MCF 10A (cell line): ENCODE measurements at regions of chr5 and their contacts with region 1.

Region 1: DNA sequence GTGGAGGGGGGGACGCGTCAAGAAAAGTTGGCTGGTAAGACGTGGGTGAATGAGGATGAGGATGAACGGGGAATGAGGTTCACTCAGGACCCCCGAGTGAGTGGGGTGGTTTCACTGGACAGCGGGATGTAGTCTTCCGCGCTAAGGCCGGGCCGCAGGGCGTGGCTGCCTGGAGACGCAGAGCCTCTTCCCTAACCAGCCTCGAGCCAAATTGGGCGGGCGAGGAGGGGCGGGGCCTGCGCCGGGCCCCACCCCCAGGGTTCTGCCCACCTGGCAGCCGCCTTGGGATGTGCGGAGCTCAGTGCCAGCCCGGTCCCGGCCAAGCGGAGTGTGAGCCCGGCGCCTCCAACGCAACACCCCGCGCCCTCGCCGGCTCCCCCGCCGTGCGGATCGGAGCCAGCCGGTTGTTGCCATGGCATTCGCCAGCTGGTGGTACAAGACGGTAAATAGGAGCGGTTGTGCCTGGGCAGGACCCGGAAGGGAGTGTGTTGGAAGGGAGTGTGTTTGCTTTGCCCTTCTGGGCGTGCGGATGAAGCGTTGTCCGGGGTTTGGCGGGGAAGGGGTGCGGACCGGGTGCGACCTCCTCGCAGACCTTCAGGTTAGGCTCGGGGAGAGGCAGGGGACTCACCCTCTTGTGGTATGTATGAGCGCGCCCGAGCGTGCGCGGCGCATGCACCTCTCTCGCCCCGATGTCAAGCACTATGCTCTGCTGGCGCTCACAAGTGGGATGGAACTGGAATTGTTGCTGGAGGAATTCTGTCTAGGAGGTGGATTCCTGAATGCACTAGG is 743 bp downstream of the CAST start:
- DNase-seq: peak; percentile 95
- H3K4me3 Mint-ChIP-seq: peak overlapping the region; percentile 76
- H3K27ac Mint-ChIP-seq: peak overlapping the region; percentile 91
- H3K4me1 Mint-ChIP-seq: peaks cover 20% of the 10 kb centered on the region
- H3K27me3 Mint-ChIP-seq: no peaks in the 10 kb centered on the region
- CTCF ChIP-seq: no peak

Region 2: GRCh38 chr5:96344678-96345577 is 318.0 kb before region 1 on chr5:
- CTCF ChIA-PET with region 1: interaction called, 7 read pairs
- POLR2A ChIA-PET with region 1: interaction called, 13 read pairs
- intact Hi-C with region 1: no loop called
- DNase-seq: peak; percentile 83
- H3K4me3 Mint-ChIP-seq: no peak overlapping the region
- H3K27ac Mint-ChIP-seq: no peak overlapping the region
- H3K4me1 Mint-ChIP-seq: peaks cover 16% of the 10 kb centered on the region
- H3K27me3 Mint-ChIP-seq: no peaks in the 10 kb centered on the region
- CTCF ChIP-seq: peak; percentile 67

Region 3: DNA sequence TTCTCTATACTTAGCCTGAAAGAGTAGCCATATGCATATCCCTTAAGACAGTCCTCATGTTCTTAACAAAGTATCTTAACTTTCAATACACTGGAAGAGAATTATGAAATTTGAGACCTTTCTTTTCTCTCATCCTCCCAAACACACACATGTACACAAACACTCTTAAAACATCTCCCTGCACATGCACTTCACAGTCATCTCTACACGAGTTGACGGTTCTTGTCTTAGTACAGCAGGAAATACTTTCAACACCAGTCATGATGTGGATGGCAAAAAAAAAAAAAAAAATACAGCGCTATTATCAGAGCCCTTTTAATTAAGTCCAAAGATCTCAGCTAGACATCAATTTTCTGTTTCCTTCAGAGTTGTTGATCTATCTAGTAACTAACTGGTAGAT is 186.3 kb before region 1 on chr5:
- CTCF ChIA-PET with region 1: no interaction called
- POLR2A ChIA-PET with region 1: no interaction called
- intact Hi-C with region 1: no loop called
- DNase-seq: no peak
- H3K4me3 Mint-ChIP-seq: no peak overlapping the region
- H3K27ac Mint-ChIP-seq: no peak overlapping the region
- H3K4me1 Mint-ChIP-seq: peaks cover 6% of the 10 kb centered on the region
- H3K27me3 Mint-ChIP-seq: no peaks in the 10 kb centered on the region
- CTCF ChIP-seq: no peak

Region 4: DNA sequence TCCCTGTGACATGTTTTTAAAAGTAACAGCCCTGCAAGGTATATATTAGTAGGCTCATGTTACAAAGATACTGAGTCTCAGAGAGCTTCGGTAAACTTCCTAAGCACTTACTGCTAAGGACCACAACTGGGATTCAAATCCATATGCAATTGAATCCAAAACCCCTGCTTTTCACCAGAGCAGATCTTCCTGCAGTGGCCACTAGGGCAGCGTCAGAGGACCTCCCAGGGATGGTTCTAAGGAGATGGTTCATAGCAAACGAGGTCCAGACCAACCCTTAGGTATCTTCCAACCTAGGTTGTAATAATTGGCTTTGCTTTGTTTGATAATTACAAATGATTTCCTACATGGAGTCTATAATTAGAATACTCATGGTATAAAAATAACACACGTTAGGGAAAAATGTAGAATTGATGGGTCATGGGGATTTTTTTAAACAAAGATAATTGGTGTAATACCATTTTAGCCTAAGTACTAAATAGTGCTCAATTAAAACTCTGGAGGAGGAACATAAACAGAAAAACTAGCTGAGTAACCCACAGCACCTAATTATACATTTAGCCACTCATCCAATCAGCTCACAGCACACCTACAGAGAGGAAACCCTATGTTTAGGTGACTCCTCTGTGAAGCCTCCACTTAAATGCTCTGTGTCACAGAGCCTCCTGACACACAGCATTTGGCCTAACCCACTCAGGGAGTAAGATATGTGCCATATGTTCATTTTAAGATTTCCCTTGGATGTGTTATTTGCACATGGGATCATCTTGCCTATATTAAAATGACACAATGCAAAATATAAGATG is 10.8 kb before region 1 on chr5:
- CTCF ChIA-PET with region 1: interaction called, 8 read pairs
- POLR2A ChIA-PET with region 1: interaction called, 47 read pairs
- intact Hi-C with region 1: no loop called
- DNase-seq: peak; percentile 39
- H3K4me3 Mint-ChIP-seq: no peak overlapping the region
- H3K27ac Mint-ChIP-seq: no peak overlapping the region
- H3K4me1 Mint-ChIP-seq: peaks cover 40% of the 10 kb centered on the region
- H3K27me3 Mint-ChIP-seq: no peaks in the 10 kb centered on the region
- CTCF ChIP-seq: peak; percentile 13

Region 5: DNA sequence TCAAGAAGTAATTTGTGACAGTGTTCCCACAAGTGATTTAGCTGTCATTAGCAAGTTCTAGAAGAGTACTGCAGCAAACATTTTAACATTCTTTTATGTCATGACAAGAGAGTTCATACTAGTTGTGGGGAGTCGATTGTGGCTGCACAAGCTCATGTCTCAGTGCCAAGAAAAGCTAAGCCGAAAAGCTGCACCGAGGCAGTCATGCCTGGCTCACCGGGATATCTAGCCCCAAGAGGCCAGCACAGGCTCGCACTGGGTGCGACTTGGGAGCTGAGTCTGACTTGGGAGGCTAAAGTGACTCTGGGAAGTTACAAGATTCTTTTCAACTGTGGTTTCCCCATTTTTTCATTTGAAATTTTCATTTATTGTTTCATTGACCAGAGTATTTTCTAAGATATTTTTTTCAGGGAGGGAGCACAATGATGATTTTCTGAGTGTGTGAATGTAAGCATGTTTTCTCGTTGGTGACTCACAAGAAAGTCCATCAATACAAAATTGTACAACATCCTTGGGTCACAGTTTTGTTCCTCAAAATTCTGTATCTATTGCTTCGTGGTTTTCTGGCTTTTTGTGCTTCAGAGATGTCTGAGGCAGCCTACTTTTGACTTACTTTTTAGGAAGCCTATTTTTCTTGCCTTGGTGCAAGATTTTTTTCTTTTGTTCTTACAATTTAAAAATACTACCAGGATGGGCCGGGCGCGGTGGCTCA is 18.0 kb after region 1 on chr5:
- CTCF ChIA-PET with region 1: interaction called, 28 read pairs
- POLR2A ChIA-PET with region 1: interaction called, 79 read pairs
- intact Hi-C with region 1: no loop called
- DNase-seq: peak; percentile 43
- H3K4me3 Mint-ChIP-seq: no peak overlapping the region
- H3K27ac Mint-ChIP-seq: no peak overlapping the region
- H3K4me1 Mint-ChIP-seq: peaks cover 14% of the 10 kb centered on the region
- H3K27me3 Mint-ChIP-seq: no peaks in the 10 kb centered on the region
- CTCF ChIP-seq: no peak

Region 6: GRCh38 chr5:96702503-96703383 is 39.8 kb after region 1 on chr5:
- CTCF ChIA-PET with region 1: interaction called, 8 read pairs
- POLR2A ChIA-PET with region 1: interaction called, 169 read pairs
- intact Hi-C with region 1: loop called (anchors 5 kb)
- DNase-seq: peak; percentile 91
- H3K4me3 Mint-ChIP-seq: peak overlapping the region; percentile 82
- H3K27ac Mint-ChIP-seq: peak overlapping the region; percentile 97
- H3K4me1 Mint-ChIP-seq: peaks cover 56% of the 10 kb centered on the region
- H3K27me3 Mint-ChIP-seq: no peaks in the 10 kb centered on the region
- CTCF ChIP-seq: no peak

Region 7: GRCh38 chr5:96714951-96715451 is 52.1 kb after region 1 on chr5:
- CTCF ChIA-PET with region 1: no interaction called
- POLR2A ChIA-PET with region 1: interaction called, 28 read pairs
- intact Hi-C with region 1: no loop called
- DNase-seq: peak; percentile 74
- H3K4me3 Mint-ChIP-seq: no peak overlapping the region
- H3K27ac Mint-ChIP-seq: peak overlapping the region; percentile 93
- H3K4me1 Mint-ChIP-seq: peaks cover 43% of the 10 kb centered on the region
- H3K27me3 Mint-ChIP-seq: no peaks in the 10 kb centered on the region
- CTCF ChIP-seq: no peak

Region 8: DNA sequence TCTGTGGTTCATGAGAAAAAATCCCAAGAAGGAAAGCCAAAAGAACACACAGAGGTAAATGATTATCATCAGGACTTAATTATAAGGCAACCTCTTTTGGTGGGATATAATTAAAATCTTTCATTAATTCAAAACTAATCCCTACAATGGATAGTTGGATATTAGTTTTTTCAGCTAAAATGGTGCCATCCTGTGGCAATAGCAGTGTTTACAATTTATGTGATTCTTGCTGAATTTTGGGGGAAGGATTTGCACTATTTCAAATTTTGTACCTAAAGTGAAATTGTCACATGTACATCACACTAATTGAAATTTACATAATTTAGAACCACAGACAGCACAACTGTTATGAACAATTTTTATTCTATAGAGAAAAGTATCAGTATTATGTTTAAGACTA is 66.2 kb after region 1 on chr5:
- CTCF ChIA-PET with region 1: no interaction called
- POLR2A ChIA-PET with region 1: interaction called, 5 read pairs
- intact Hi-C with region 1: loop called (anchors 1 kb)
- DNase-seq: no peak
- H3K4me3 Mint-ChIP-seq: no peak overlapping the region
- H3K27ac Mint-ChIP-seq: no peak overlapping the region
- H3K4me1 Mint-ChIP-seq: peaks cover 12% of the 10 kb centered on the region
- H3K27me3 Mint-ChIP-seq: no peaks in the 10 kb centered on the region
- CTCF ChIP-seq: peak; percentile 34

Region 9: DNA sequence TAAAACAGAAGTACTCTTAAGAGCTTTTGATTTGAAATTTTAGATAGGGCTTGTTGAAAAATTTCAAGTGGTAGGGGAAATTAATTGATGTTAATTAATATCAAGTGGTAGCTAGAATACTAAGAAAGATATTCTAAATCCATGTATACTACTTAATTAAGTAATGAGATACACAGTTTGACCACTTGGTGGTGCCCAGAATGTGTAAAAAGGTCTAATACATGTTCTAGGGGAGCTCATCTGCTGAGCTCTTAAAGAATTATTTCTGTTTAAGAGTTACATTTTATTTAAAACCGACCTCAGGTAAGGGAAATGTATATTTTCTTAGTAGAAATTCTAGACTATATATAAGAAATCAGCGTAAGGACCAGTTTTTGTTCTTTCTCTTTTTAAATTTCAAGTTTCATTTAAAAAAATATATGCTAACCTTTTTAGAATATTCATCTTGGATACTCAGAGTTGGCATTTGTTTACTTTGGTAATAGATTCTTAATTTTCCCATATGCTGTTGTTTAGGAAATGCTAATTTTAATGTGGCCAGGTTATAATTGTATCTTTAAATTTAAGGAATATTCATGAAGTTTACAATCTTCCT is 334.4 kb after region 1 on chr5:
- CTCF ChIA-PET with region 1: no interaction called
- POLR2A ChIA-PET with region 1: no interaction called
- intact Hi-C with region 1: no loop called
- DNase-seq: peak; percentile 50
- H3K4me3 Mint-ChIP-seq: no peak overlapping the region
- H3K27ac Mint-ChIP-seq: no peak overlapping the region
- H3K4me1 Mint-ChIP-seq: no peaks in the 10 kb centered on the region
- H3K27me3 Mint-ChIP-seq: no peaks in the 10 kb centered on the region
- CTCF ChIP-seq: peak; percentile 36